Activated T-helper 1 cell treated with anti-CD3 and anti-CD28 coated beads, Interleukin-12 subunit alpha, Interleukin-12 subunit beta, Interleukin-2, Interleukin-4 antibody, amounts not matched to agents 30 ng/mL and 10 ng/mL and 1 ng/mL, durations not matched to agents 14 hours and 24 hours and 36 hours (primary cell): ENCODE measurements at regions of chr4 and their contacts with region 1.

Region 1: DNA sequence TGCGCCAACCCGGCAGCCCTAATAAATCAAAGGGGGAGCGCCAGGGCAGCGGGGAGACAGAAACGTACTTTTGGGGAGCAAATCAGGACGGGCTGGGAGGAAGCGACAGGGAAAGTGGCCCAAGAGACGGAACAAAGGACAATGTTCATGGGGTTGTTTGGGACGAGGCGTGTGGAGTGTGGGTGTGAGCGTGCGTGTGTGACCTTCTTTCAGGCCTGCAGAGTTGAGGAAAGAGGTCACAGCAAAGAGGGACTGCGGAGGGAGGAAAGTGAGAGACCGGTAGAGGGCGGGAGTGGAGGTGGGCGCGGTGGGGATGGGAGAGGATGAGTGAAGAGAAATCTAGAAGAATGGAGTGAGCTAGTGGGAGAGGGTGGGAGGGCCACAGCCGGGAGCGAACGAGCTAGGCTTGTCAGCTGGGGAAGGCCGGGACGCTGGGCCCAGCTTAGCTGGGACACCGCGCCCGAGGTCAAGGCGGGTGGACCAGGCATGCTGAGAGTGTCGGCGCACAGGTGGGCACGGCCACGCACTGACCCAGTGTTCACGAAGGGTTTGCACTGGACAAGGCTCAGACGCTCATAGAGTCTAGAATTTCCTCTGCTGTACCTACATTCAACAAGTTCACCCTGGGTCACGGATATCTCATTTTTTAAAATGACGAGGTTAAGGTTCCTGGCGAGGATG is 14.7 kb upstream of the PITX2 start:
- DNase-seq: no peak
- H3K4me3 Mint-ChIP-seq: no peak overlapping the region
- H3K27ac Mint-ChIP-seq: peak overlapping the region; percentile 13
- H3K4me1 Mint-ChIP-seq: no peaks in the 10 kb centered on the region
- H3K27me3 Mint-ChIP-seq: peaks cover 89% of the 10 kb centered on the region

Region 2: DNA sequence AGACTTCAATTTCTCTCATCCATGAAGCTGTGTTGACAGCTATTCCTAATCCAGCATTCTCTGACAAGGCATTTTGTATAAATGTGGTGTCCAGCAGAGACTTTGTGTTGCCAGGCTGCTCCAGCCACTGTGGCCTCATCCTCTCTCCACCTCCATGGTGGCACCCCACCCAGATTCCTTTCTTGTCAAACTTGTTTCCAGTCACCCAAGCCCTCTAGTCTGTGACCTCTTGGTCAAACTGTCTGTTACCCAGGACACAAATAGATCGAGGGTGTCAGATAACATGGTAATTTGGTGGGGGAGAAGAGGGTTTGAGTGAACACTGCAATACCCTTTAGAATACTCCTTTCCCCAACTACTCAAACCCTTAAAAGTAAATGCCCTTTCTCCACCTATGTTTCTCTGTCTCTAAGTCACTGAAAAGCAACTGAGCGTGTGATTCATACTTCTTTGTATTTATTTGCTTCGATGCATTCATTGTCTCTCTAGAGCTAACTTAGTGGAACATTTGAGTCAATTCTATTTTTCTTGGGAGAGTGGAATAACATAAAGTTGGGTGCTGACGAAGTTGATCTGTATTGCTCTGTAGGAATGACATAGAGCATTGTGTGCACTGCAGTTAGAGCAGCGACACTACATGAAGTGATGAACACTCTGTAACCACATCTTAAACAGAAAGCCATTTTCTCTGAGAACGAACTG is 28.3 kb before region 1 on chr4:
- intact Hi-C with region 1: loop called (anchors 5 kb)
- DNase-seq: no peak
- H3K4me3 Mint-ChIP-seq: no peak overlapping the region
- H3K27ac Mint-ChIP-seq: no peak overlapping the region
- H3K4me1 Mint-ChIP-seq: no peaks in the 10 kb centered on the region
- H3K27me3 Mint-ChIP-seq: peaks cover 41% of the 10 kb centered on the region

Region 3: GRCh38 chr4:110617646-110618580 is 19.6 kb before region 1 on chr4:
- intact Hi-C with region 1: loop called (anchors 1 kb)
- DNase-seq: no peak
- H3K4me3 Mint-ChIP-seq: no peak overlapping the region
- H3K27ac Mint-ChIP-seq: peak overlapping the region; percentile 73
- H3K4me1 Mint-ChIP-seq: no peaks in the 10 kb centered on the region
- H3K27me3 Mint-ChIP-seq: peaks cover 87% of the 10 kb centered on the region